Upper lobe of right lung (tissue), 1 donor: ENCODE measurements at regions of chr7 and their contacts with region 1.

Region 1: DNA sequence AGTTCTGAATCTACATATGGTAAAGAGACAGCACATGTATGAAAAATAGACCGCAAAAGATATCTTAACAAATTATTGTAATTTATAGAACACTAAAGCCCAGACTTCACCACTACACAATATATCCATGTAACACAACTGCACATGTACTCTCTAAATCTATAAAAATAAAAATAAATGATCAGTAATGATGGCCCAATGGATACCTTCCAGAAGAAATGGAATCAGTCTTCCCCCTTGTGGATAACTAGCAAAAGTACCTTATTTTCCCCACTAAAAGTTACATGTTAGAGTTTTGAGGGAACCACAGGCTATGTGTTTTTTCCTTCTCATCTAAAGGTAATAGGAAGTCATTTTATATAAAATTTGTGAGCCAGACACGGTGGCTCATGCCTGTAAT is 25.7 kb downstream of the C7orf25 start:
- DNase-seq: no peak
- ATAC-seq: no peak
- H3K4me3 ChIP-seq: no peak overlapping the region
- H3K27ac ChIP-seq: peak overlapping the region; percentile 27
- H3K4me1 ChIP-seq: peaks cover 19% of the 10 kb centered on the region
- H3K27me3 ChIP-seq: no peaks in the 10 kb centered on the region
- CTCF ChIP-seq: peak; percentile 46

Region 2: DNA sequence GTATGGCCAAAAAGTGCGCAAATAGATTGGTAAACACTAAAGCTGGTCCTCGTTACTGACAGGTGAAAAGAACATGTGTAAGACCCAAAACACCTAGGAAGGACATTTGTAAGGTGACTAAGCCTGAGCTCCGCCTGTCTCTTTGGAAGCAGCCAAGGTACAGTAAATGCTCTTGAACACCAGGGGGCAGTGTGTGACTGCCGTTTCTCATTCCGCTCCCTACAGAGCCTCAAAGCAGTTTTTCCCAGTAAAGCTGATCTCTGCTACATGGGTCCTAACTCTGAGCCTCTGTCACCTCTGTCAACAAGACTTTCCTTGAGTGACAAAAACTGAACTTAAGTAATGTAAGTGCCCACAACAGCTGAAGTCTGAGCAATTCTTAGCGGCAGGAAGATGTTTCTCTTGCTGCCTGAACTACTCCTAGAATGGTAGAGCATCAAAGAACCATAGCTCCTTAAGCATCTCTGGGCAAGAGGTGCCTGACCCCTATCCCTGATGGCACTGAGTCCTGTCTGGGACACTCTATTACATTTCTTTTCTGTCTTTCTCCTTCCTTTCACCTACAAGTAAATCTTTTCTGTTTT is 945.3 kb before region 1 on chr7:
- intact Hi-C with region 1: loop called (anchors 10 kb)
- DNase-seq: peak; percentile 72
- ATAC-seq: peak; percentile 88
- H3K4me3 ChIP-seq: no peak overlapping the region
- H3K27ac ChIP-seq: no peak overlapping the region
- H3K4me1 ChIP-seq: peaks cover 17% of the 10 kb centered on the region
- H3K27me3 ChIP-seq: no peaks in the 10 kb centered on the region
- CTCF ChIP-seq: peak; percentile 93